ENCODE measurements at regions of chr1 and their contacts with region 1.

Region 1: GRCh38 chr1:158819461-158820443 is 11.4 kb upstream of the MNDA start:
- DNase-seq: peak; percentile 74
- H3K4me3 Mint-ChIP-seq: peak overlapping the region; percentile 70
- H3K27ac Mint-ChIP-seq: peak overlapping the region; percentile 76
- H3K4me1 Mint-ChIP-seq: peaks cover 27% of the 10 kb centered on the region
- H3K27me3 Mint-ChIP-seq: peaks cover 7% of the 10 kb centered on the region

Region 2: GRCh38 chr1:158586942-158587341 is 232.8 kb before region 1 on chr1:
- intact Hi-C with region 1: no loop called
- DNase-seq: no peak
- H3K4me3 Mint-ChIP-seq: no peak overlapping the region
- H3K27ac Mint-ChIP-seq: no peak overlapping the region
- H3K4me1 Mint-ChIP-seq: no peaks in the 10 kb centered on the region
- H3K27me3 Mint-ChIP-seq: peaks cover 2% of the 10 kb centered on the region

Region 3: DNA sequence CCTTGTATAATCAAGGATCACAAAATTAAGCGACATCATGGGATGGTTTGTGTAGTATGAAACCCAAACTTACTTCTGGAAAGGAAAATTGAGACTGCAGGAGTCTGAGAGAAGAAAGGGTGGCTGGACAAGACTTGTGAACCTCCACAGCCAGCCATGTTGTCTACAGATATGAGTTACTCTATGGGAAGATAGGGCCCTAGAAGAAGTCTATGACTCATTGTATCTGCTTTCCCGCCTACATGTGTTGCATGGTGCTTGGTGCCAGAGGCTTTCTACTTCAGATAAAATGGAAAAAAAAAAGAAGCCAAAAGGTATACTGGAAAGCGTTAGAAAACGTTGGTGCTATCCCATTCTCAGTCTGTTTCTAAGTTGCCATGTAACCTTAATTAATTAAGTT is 20.1 kb before region 1 on chr1:
- intact Hi-C with region 1: loop called (anchors 1 kb)
- DNase-seq: no peak
- H3K4me3 Mint-ChIP-seq: no peak overlapping the region
- H3K27ac Mint-ChIP-seq: peak overlapping the region; percentile 22
- H3K4me1 Mint-ChIP-seq: peaks cover 7% of the 10 kb centered on the region
- H3K27me3 Mint-ChIP-seq: peaks cover 26% of the 10 kb centered on the region

Region 4: DNA sequence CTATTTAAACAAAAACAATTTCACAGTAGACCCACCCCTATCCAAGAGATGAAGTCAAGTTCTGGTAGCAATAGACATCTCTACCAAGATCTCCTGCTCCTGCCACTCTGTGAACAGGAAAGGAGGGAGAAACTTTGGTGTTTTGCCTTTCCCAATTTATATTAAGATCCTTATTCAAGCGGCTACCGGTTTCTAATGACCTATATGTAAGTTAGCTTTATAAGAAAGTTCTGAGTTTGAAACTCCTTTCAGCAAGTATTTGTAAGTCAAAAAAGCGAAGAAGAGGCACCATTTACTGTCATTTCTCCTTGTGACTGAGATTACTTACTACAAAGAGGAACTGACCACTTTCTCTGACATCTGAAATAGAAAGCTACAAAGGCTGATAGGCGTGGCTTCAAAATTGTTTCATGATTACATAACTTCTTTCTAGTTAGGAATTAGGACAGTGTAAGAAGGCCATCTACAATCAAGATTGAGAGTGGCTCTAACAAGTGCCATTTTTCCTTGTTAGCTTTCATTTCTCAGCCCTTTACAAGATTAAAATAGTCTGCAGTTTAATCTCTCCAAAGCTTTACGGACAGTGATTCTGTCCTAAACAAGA is 11.3 kb after region 1 on chr1 and contains the start of gene MNDA:
- intact Hi-C with region 1: loop called (anchors 1 kb)
- DNase-seq: no peak
- H3K4me3 Mint-ChIP-seq: peak within 1 kb of the TSS; percentile 6
- H3K27ac Mint-ChIP-seq: peak within 1 kb of the TSS; percentile 7
- H3K4me1 Mint-ChIP-seq: peaks cover 13% of the 10 kb centered on the region
- H3K27me3 Mint-ChIP-seq: peaks cover 5% of the 10 kb centered on the region
- total RNA-seq, gene MNDA: not detected in 2 replicates

Region 5: DNA sequence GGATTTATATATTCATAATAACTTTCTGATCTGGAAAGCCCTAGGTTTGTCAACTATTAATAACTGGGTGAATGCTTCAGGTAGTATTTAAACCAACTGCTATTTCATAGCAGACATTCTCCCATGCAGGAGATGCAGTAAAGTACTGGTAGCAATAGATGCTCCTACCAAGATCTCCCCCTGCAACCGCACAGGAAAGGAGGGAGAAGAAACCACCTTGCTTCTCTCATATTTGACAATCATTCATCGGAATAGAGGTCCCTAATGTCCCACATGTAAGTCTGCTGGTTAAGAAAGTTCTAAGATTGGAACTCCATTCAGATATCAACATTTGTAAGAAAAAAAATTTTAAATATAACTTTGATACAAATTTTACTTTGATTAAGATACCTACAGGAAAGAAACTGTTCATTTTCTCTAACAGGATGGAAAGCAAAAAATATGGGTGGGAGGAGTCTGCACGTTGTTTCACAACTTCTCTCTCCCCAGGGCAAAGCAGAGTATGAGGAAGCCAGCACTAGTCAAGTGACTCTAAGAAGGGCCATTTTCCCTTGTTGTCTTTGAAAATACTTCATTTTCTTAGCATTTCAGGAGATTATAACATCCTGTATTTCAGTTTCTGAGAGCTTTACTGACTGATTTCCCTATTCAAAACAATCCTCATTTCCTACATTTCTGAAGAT is 111.4 kb after region 1 on chr1 and contains the start of gene PYHIN1:
- intact Hi-C with region 1: loop called (anchors 2 kb)
- DNase-seq: peak; percentile 80
- H3K4me3 Mint-ChIP-seq: peak within 1 kb of the TSS; percentile 82
- H3K27ac Mint-ChIP-seq: peak within 1 kb of the TSS; percentile 83
- H3K4me1 Mint-ChIP-seq: peaks cover 25% of the 10 kb centered on the region
- H3K27me3 Mint-ChIP-seq: peaks cover under 1% of the 10 kb centered on the region
- total RNA-seq, gene PYHIN1: 10.4 and 11.3 TPM in 2 replicates

Region 6: DNA sequence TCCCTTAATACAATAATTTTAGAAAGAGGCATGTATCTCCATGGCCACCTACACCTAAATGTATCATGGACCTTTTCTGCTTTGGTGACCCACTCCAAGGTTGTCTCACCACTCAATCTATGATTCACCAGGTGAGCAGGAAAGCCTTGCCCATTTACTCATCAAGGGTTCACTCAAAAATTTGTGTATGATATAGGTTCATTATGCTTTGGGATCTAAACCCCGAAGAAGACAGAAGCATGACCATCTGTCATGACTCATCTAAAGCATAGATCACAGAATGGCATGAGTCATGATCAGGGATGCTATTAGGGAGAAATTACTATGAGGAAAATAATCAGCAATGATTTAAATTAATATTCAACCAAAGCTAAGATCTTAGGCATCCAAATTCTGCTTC is 150.1 kb after region 1 on chr1:
- intact Hi-C with region 1: loop called (anchors 1 kb)
- DNase-seq: no peak
- H3K4me3 Mint-ChIP-seq: no peak overlapping the region
- H3K27ac Mint-ChIP-seq: peak overlapping the region; percentile 84
- H3K4me1 Mint-ChIP-seq: peaks cover 15% of the 10 kb centered on the region
- H3K27me3 Mint-ChIP-seq: no peaks in the 10 kb centered on the region

Region 7: DNA sequence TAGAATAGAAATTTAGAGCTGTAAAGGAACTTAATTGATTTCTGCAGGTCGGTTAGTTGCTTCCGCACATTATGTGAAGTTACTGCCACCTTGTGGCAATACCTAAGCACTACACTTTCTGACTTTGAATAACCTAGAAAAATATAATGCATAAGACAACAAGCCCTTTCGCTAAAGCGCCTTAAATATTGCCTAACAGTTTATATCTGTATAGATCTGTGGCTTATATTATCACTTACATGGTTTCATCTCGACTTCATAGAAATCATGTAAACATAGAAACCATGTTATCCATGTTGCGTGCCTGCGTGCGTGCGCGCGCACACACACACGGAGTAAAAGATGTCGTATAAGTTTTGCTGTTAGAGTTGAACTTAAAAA is 179.0 kb after region 1 on chr1:
- intact Hi-C with region 1: no loop called
- DNase-seq: peak; percentile 87
- H3K4me3 Mint-ChIP-seq: peak overlapping the region; percentile 7
- H3K27ac Mint-ChIP-seq: no peak overlapping the region
- H3K4me1 Mint-ChIP-seq: peaks cover 32% of the 10 kb centered on the region
- H3K27me3 Mint-ChIP-seq: no peaks in the 10 kb centered on the region

Region 8: DNA sequence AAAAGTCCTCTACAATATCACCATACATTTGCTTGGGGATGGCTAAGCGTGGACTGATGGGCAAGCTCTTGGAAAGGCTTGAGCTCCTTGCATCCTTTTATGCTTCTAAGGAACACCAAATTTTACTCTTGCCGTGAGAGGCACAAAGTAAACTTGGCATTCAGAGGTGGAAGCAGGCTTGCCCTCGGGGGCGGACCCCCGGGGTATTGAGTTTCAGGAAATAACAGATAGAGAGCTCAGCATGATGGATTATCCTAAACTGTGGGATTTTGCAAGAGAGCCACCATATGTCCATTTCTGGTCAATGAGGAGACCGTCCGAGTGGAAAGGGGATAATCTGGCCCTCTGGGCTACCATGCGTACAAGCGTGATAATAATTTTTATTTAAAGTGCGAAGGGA is 204.0 kb after region 1 on chr1:
- intact Hi-C with region 1: no loop called
- DNase-seq: no peak
- H3K4me3 Mint-ChIP-seq: peak overlapping the region; percentile 51
- H3K27ac Mint-ChIP-seq: peak overlapping the region; percentile 54
- H3K4me1 Mint-ChIP-seq: peaks cover 69% of the 10 kb centered on the region
- H3K27me3 Mint-ChIP-seq: no peaks in the 10 kb centered on the region